Naive thymus-derived CD4-positive, alpha-beta T cell (primary cell): ENCODE measurements at regions of chr9 and their contacts with region 1.

Region 1: GRCh38 chr9:127092041-127092608 is 30.3 kb downstream of the ANGPTL2 start:
- DNase-seq: no peak
- ATAC-seq: no peak
- H3K4me3 ChIP-seq: no peak overlapping the region
- H3K4me3 Mint-ChIP-seq: no peak overlapping the region
- H3K27ac ChIP-seq: no peak overlapping the region
- H3K27ac Mint-ChIP-seq: no peak overlapping the region
- H3K4me1 ChIP-seq: no peaks in the 10 kb centered on the region
- H3K4me1 Mint-ChIP-seq: no peaks in the 10 kb centered on the region
- H3K27me3 ChIP-seq: no peaks in the 10 kb centered on the region
- H3K27me3 Mint-ChIP-seq: peaks cover 0 to 9% (median 4%) of the 10 kb centered on the region in 5 donors

Region 2: GRCh38 chr9:126591083-126591482 is 501.0 kb before region 1 on chr9:
- CTCF ChIA-PET with region 1: no interaction called
- POLR2A ChIA-PET with region 1: no interaction called
- intact Hi-C with region 1: loop called in 1 of 2 experiments (anchors 5 kb)
- DNase-seq: no peak
- ATAC-seq: no peak
- H3K4me3 ChIP-seq: no peak overlapping the region
- H3K4me3 Mint-ChIP-seq: no peak overlapping the region
- H3K27ac ChIP-seq: no peak overlapping the region
- H3K27ac Mint-ChIP-seq: no peak overlapping the region
- H3K4me1 ChIP-seq: no peaks in the 10 kb centered on the region
- H3K4me1 Mint-ChIP-seq: no peaks in the 10 kb centered on the region
- H3K27me3 ChIP-seq: no peaks in the 10 kb centered on the region
- H3K27me3 Mint-ChIP-seq: peaks cover 35 to 70% (median 49%) of the 10 kb centered on the region in 5 donors